Mammary epithelial cell (primary cell): ENCODE measurements at regions of chr11 and their contacts with region 1.

Region 1: DNA sequence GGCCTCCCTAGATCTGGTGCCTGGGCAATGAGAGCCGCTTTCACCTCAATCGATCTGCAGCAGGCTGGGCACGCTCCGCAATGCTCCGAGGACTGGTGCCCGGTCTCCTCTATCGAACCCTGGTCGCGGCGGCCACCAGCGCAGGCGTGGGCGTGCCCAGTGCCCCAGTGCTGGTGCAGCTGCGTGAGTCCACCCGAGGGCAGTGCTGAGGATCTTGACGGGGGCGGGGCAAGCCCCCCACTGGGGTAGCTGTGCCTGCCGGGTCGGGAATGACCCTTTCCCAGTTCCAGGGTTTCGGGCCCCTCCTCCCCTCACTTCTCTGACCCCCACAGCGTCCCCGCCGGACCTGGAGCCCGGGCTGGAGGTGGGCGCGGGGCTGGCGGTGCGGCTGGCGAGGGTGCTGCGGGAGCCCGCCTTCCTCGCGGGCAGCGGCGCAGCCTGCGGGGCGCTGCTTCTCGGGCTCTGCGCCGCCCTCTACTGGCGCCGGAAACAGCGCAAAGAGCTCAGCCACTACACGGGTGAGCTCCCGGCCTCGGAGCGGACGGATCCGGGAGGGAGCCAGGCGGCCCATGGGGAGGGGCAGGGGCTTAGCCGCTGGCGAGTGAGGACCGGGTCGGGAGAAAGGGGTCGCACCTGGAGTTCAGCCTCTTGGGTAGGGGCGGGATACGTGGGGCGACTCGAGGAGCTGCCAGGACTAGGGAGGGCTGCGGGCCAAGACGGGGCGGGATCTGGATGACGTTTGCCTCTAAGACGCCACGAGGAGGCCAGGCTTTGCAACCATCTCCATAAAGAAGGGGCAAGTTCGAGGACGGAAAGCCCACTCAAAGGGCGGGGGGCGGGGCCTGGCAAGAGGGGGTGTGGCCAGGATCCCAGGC is 10.9 kb downstream of the ROBO3 start:
- DNase-seq: peak; percentile 86
- H3K4me3 ChIP-seq: peak overlapping the region; percentile 65 to 80 (median 70)
- H3K27ac ChIP-seq: peak overlapping the region; percentile 88
- H3K4me1 ChIP-seq: peaks cover 16% of the 10 kb centered on the region
- H3K27me3 ChIP-seq: no peaks in the 10 kb centered on the region
- CTCF ChIP-seq: peak; percentile 46 to 79

Region 2: GRCh38 chr11:124758317-124759203 is 117.6 kb before region 1 on chr11:
- CTCF ChIA-PET with region 1: interaction called, 24 read pairs
- dilution Hi-C with region 1: no loop called
- in situ Hi-C with region 1: no loop called
- intact Hi-C with region 1: no loop called
- DNase-seq: peak; percentile 45
- H3K4me3 ChIP-seq: peak overlapping the region in 2 of 3 experiments; percentile 10 to 22
- H3K27ac ChIP-seq: no peak overlapping the region
- H3K4me1 ChIP-seq: peaks cover 20% of the 10 kb centered on the region
- H3K27me3 ChIP-seq: peaks cover 25% of the 10 kb centered on the region
- CTCF ChIP-seq: peak; percentile 49 to 73

Region 3: DNA sequence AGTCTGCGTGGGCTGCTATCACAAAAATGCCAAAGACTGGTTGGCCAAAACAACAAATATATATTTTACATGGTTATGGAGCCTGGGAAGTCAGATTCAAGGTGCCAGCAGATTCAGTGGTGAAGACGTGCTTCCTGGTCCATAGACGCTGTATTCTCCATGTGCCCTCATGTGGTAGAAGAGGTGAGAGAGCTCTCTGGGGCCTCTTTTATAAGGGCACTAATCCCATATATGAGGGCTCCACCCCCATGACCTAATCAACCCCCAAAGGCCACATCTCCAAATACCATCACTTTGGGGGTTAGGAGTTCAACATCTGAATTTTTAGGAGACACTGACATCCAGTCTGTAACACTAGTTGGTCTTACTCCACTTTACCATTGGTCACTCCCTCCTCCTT is 20.7 kb before region 1 on chr11:
- CTCF ChIA-PET with region 1: no interaction called
- dilution Hi-C with region 1: no loop called
- in situ Hi-C with region 1: no loop called
- intact Hi-C with region 1: no loop called
- DNase-seq: no peak
- H3K4me3 ChIP-seq: no peak overlapping the region
- H3K27ac ChIP-seq: no peak overlapping the region
- H3K4me1 ChIP-seq: no peaks in the 10 kb centered on the region
- H3K27me3 ChIP-seq: peaks cover 12% of the 10 kb centered on the region
- CTCF ChIP-seq: no peak

Region 4: DNA sequence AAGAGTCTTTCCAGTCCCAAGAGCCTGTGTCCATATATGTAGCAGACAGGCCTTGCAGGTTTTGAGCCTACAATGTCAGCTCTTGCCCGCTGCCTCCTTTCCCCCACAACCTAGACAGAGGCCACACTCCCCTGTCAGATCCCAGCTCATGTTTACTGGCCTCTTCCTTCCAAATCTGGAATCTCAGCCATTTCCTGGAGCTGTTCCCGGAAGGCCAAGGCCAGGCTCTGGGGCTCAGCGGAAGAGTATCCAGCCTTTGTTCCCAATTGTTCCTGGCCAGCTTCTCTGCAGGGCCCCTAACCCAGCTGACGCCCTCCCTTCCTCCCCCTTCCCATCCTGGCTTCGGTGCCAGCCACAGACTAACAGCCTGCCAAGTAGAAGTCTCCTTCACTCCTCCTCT is 22.5 kb after region 1 on chr11:
- CTCF ChIA-PET with region 1: interaction called, 18 read pairs
- dilution Hi-C with region 1: no loop called
- in situ Hi-C with region 1: no loop called
- intact Hi-C with region 1: loop called (anchors 1 kb)
- DNase-seq: no peak
- H3K4me3 ChIP-seq: no peak overlapping the region
- H3K27ac ChIP-seq: peak overlapping the region; percentile 91
- H3K4me1 ChIP-seq: peaks cover 66% of the 10 kb centered on the region
- H3K27me3 ChIP-seq: no peaks in the 10 kb centered on the region
- CTCF ChIP-seq: no peak

Region 5: DNA sequence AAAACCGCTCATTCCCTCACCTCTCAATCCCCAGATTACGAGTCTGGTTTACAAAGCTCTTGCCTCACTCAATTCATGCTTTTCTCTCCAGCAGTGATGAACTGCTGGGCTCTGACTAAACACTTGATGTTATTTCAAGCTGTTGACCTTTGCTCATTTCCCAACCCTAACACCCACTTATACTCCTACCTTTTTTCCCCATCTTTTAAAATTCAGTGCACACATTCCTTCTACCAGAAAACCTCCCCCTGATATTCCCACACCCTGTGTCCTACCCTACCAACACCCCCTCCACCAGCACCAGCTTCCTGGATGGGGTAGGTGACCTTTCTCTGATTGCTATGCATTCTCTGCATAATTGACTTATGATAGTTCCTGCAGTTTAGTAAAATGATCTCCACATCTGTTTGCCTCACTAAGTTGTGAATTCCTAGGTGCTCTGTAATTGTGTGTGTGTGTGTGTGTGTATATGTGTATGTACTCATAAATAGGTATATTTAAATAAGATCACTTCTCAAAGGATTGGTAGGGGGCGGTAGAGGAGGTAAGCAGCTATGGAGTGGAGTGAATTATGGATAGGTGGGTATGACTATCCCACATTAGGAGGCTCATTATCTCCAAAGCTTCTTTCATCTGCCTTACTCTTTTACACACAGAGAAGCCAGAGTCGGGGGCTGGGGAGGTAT is 58.8 kb after region 1 on chr11:
- CTCF ChIA-PET with region 1: interaction called, 4 read pairs
- dilution Hi-C with region 1: no loop called
- in situ Hi-C with region 1: loop called in 1 of 2 experiments (anchors 10 kb)
- intact Hi-C with region 1: no loop called
- DNase-seq: peak; percentile 46
- H3K4me3 ChIP-seq: no peak overlapping the region
- H3K27ac ChIP-seq: no peak overlapping the region
- H3K4me1 ChIP-seq: peaks cover 5% of the 10 kb centered on the region
- H3K27me3 ChIP-seq: no peaks in the 10 kb centered on the region
- CTCF ChIP-seq: peak in 1 of 2 donors; percentile 19

Region 6: DNA sequence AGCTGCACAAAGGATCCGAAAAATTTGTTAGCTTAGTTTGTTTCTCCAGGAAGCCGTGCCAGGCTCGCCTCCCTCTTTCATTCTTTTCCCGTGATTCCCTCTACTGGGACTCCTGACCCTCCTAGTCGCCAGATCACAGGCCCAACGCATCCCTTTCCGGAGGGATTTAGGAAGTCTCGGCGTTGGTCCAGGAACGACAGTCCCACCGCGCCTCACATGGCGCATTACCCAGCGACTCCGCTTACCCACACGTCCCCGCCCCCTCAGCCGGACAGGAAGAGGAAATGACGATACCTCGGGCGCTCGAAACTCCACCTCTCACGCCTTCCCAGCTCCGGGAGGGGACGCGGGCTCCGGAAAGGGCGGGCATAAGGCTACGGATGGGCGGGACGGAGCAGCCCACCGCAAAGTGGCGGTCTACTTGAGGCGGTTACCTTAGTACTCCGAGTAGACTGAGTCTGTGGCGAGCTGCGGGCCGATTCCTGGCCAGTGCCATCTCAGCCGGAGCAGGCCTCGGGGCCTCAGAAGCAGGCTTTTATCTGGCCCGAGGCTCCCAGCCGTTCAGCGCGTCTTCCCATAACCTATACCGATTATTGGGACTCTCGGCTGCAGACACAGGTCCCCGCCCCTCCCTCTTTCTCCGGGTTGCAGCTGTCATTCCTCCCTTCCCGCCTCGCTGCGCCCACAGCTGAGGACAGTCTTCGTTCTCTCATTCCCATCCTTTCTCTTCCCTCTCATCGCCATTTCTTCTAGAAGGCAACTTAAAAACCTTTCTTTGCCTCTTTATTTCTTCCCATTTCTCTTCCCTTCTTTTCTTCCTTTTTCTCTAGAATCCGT is 77.8 kb after region 1 on chr11 and contains the start of gene CCDC15:
- CTCF ChIA-PET with region 1: interaction called, 13 read pairs
- dilution Hi-C with region 1: no loop called
- in situ Hi-C with region 1: no loop called
- intact Hi-C with region 1: loop called (anchors 1 kb)
- DNase-seq: peak; percentile 97
- H3K4me3 ChIP-seq: peak within 1 kb of the TSS; percentile 63 to 65 (median 64)
- H3K27ac ChIP-seq: peak within 1 kb of the TSS; percentile 77
- H3K4me1 ChIP-seq: peaks cover 9% of the 10 kb centered on the region
- H3K27me3 ChIP-seq: no peaks in the 10 kb centered on the region
- CTCF ChIP-seq: no peak
- total RNA-seq, gene CCDC15: 2.3 to 5.4 TPM